Activated CD4-positive, alpha-beta memory T cell treated with anti-CD3 and anti-CD28 coated beads for 36 hours (primary cell): ENCODE measurements at regions of chr2 and their contacts with region 1.

Region 1: GRCh38 chr2:7044261-7045250 is 127.3 kb downstream of the RNF144A start:
- DNase-seq: peak; percentile 71
- H3K4me3 Mint-ChIP-seq: no peak overlapping the region
- H3K27ac Mint-ChIP-seq: no peak overlapping the region
- H3K4me1 Mint-ChIP-seq: peaks cover 2% of the 10 kb centered on the region
- H3K27me3 Mint-ChIP-seq: no peaks in the 10 kb centered on the region

Region 2: GRCh38 chr2:6865346-6866274 is 178.9 kb before region 1 on chr2 and contains the start of gene CMPK2:
- CTCF ChIA-PET with region 1: interaction called, 10 read pairs
- POLR2A ChIA-PET with region 1: no interaction called
- intact Hi-C with region 1: no loop called
- DNase-seq: peak; percentile 84
- H3K4me3 Mint-ChIP-seq: peak within 1 kb of the TSS; percentile 92
- H3K27ac Mint-ChIP-seq: peak within 1 kb of the TSS; percentile 85
- H3K4me1 Mint-ChIP-seq: peaks cover 7% of the 10 kb centered on the region
- H3K27me3 Mint-ChIP-seq: peaks cover 2% of the 10 kb centered on the region
- total RNA-seq, gene CMPK2: 6.6 to 6.8 TPM

Region 3: GRCh38 chr2:6909431-6910385 is 134.8 kb before region 1 on chr2:
- CTCF ChIA-PET with region 1: interaction called, 20 read pairs
- POLR2A ChIA-PET with region 1: no interaction called
- intact Hi-C with region 1: no loop called
- DNase-seq: peak; percentile 48
- H3K4me3 Mint-ChIP-seq: peak overlapping the region; percentile 23
- H3K27ac Mint-ChIP-seq: peak overlapping the region; percentile 66
- H3K4me1 Mint-ChIP-seq: peaks cover 84% of the 10 kb centered on the region
- H3K27me3 Mint-ChIP-seq: no peaks in the 10 kb centered on the region

Region 4: GRCh38 chr2:7031547-7032245 is 12.9 kb before region 1 on chr2:
- CTCF ChIA-PET with region 1: interaction called, 28 read pairs
- POLR2A ChIA-PET with region 1: no interaction called
- intact Hi-C with region 1: no loop called
- DNase-seq: peak; percentile 56
- H3K4me3 Mint-ChIP-seq: no peak overlapping the region
- H3K27ac Mint-ChIP-seq: no peak overlapping the region
- H3K4me1 Mint-ChIP-seq: peaks cover 9% of the 10 kb centered on the region
- H3K27me3 Mint-ChIP-seq: no peaks in the 10 kb centered on the region